BJ (cell line): ENCODE measurements at regions of chr6 and their contacts with region 1.

Region 1: DNA sequence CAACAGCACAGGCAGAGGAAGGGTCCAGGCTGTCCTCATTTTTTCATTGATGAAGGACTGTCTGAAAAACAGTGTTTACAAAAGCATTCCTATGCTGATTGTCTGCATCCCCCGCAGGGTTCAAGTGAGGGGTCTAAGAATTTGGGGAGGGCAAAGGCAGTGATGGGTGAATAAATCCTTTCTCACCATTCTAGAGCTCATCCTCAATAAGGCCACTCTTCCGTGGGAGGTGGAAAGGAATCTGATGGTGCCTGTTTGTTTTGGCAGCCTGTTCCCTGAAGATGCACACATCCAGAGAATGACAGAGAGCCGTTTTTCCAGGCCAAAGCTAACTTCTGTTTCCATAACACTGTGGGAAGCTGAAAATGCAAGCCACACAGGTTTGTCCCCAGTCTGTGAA is 164.5 kb downstream of the MOXD1 start:
- DNase-seq: peak; percentile 74
- H3K4me3 ChIP-seq: no peak overlapping the region
- H3K27me3 ChIP-seq: no peaks in the 10 kb centered on the region
- CTCF ChIP-seq: no peak

Region 2: GRCh38 chr6:132247381-132248159 is 10.8 kb after region 1 on chr6:
- CTCF ChIA-PET with region 1: interaction called, 10 read pairs
- POLR2A ChIA-PET with region 1: no interaction called
- DNase-seq: no peak
- H3K4me3 ChIP-seq: no peak overlapping the region
- H3K27me3 ChIP-seq: no peaks in the 10 kb centered on the region
- CTCF ChIP-seq: peak; percentile 28; the same call in 1 of the 2 replicates